Mammary epithelial cell (primary cell): ENCODE measurements at regions of chr19 and their contacts with region 1.

Region 1: DNA sequence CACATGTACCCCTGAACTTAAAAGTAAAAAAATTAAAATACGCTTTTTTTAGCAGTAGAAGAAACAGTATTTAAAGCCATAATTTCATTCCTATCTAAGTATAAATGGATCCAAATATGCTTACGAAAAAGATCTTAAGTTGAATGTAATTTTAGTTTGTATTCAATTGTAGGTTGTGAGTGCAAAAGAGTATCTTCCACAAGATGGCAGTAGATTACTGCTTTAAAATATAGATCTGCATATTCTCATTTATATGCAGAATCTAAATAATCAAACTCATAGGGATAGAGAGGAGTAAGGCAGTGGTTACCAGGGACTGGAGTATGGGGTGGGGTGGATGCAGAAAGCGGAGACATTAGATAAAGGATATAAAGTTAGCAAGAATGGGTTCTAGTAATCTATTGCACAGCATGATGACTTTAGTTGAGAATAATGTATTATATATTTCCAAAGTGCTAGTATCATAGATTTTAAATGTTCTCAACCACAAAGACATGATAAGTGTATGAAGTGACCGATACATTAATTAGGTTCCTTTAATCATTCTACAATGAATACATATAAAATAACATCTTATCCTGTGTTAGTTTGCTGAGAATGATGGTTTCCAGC is 14.2 kb downstream of the OR7A17 start:
- DNase-seq: peak; percentile 21
- H3K4me3 ChIP-seq: no peak overlapping the region
- H3K27ac ChIP-seq: no peak overlapping the region
- H3K4me1 ChIP-seq: no peaks in the 10 kb centered on the region
- H3K27me3 ChIP-seq: no peaks in the 10 kb centered on the region
- CTCF ChIP-seq: peak; percentile 56 to 69

Region 2: GRCh38 chr19:14571695-14572490 is 299.8 kb before region 1 on chr19 and contains the start of gene NDUFB7:
- CTCF ChIA-PET with region 1: no interaction called
- dilution Hi-C with region 1: no loop called
- in situ Hi-C with region 1: no loop called
- intact Hi-C with region 1: loop called (anchors 5 kb)
- DNase-seq: peak; percentile 94
- H3K4me3 ChIP-seq: peak within 1 kb of the TSS; percentile 67 to 100 (median 99)
- H3K27ac ChIP-seq: peak within 1 kb of the TSS; percentile 70
- H3K4me1 ChIP-seq: peaks cover 14% of the 10 kb centered on the region
- H3K27me3 ChIP-seq: no peaks in the 10 kb centered on the region
- CTCF ChIP-seq: peak; percentile 68 to 85
- total RNA-seq, gene NDUFB7: 142 to 177 TPM

Region 3: DNA sequence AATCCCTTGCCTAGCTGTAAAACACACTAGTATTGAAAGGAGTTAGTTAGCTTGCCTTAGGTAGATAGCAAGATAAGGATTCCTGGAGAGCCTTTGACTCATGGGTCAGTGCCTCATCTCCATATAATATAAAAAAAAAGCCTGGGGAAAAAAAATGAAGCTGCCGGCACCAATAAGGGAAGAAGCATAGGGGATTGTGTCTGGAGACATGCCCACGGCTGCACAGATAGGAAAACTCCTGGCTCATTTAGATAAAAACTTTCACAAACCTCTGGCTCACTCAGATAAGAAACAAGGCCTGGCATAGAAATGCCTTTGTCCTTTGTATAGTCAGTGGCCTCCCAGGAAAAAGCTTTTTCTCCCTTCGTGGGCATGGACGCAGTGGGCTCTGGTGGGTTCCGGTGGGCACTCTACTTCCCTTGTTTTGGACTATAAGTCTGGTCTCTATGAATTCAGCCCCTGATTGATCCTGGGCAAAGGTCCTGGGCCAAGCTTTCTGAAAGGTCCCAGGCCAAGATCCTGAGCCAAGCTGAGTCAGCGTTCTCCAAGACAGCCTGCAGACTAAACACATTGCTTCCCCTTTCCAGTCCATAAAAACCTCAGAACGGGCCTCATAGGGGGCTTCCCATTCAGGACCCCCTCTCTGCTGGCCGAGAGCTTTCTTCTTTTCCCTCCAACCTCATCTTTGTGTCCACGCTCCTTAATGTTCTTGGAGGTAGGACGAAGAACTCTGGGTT is 19.1 kb after region 1 on chr19:
- CTCF ChIA-PET with region 1: no interaction called
- dilution Hi-C with region 1: no loop called
- in situ Hi-C with region 1: no loop called
- intact Hi-C with region 1: loop called (anchors 1 kb)
- DNase-seq: no peak
- H3K4me3 ChIP-seq: no peak overlapping the region
- H3K27ac ChIP-seq: no peak overlapping the region
- H3K4me1 ChIP-seq: no peaks in the 10 kb centered on the region
- H3K27me3 ChIP-seq: no peaks in the 10 kb centered on the region
- CTCF ChIP-seq: no peak

Region 4: DNA sequence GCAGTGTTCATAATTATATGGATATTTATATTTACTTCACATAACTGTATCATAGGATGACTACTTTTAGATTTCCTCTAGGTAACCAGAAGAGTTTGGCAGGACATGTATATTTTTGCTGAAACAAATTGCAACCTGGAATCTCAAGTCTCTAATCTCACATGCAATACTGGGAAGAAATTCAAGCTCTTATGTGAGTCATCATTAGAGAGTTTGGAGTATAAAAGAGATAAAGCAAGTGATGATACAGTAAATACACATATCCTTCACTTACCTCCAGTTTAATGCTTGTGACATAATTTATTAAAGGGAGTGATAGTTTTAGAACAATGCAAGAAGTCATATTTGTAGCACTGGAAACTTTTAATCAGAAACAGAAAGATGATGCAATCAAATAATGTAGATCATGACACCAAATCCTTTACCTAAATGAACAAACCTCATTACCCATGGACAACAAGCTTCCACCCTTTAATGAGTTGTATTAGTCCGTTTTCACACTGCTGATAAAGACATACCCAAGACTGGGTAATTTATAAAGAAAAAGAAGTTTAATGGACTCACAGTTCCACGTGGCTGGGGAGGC is 30.0 kb after region 1 on chr19:
- CTCF ChIA-PET with region 1: no interaction called
- dilution Hi-C with region 1: loop called (anchors 5 kb)
- in situ Hi-C with region 1: no loop called
- intact Hi-C with region 1: no loop called
- DNase-seq: peak; percentile 17
- H3K4me3 ChIP-seq: no peak overlapping the region
- H3K27ac ChIP-seq: no peak overlapping the region
- H3K4me1 ChIP-seq: no peaks in the 10 kb centered on the region
- H3K27me3 ChIP-seq: no peaks in the 10 kb centered on the region
- CTCF ChIP-seq: no peak

Region 5: DNA sequence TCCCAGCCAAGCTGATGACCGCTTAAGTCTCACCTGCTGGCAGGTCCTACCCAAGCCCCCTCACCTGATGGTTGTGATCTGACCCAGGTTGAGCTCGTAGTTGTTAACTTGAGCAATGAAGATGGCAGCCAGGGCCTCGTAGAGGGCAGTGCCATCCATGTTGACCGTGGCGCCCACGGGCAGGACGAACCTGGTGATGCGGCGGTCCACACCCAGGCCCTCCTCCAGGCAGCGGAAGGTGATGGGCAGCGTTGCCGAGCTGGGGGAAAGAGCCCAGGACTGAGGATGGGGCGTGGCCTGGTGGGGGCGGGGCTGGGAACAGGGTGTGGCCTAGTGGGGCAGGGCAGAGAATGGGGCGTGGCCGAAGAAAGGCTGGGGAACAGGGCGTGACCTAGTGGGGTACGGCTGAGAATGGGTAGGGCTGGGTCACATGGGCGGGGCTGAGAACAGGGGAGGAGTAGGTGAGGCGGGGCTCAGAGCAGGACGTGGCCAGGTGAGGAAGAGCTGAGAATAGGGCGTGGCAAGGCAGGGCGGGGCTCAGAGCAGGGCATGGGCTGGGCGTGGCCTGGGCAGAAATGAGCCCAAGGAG is 82.4 kb after region 1 on chr19:
- CTCF ChIA-PET with region 1: no interaction called
- dilution Hi-C with region 1: no loop called
- in situ Hi-C with region 1: no loop called
- intact Hi-C with region 1: no loop called
- DNase-seq: peak; percentile 15
- H3K4me3 ChIP-seq: no peak overlapping the region
- H3K27ac ChIP-seq: no peak overlapping the region
- H3K4me1 ChIP-seq: peaks cover 4% of the 10 kb centered on the region
- H3K27me3 ChIP-seq: no peaks in the 10 kb centered on the region
- CTCF ChIP-seq: no peak

Region 6: DNA sequence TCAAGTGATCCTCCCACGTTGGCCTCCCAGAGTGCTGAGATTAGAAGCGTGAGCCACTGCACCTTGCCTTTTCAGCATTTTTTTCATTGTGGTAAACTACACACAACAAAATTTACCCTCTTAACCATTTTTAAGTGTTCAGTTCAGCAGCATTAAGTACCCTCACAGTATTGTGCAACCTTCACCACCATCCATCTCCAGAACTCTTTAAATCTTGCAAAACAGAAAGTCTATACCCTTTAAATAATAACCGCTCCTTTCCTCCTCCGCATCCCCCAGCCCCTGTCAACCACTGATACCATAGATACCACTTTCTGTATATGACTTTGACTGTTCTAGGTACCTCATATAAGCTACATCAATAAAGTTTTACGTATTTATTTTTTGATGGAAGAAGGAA is 156.8 kb after region 1 on chr19:
- CTCF ChIA-PET with region 1: no interaction called
- dilution Hi-C with region 1: no loop called
- in situ Hi-C with region 1: no loop called
- intact Hi-C with region 1: loop called (anchors 5 kb)
- DNase-seq: no peak
- H3K4me3 ChIP-seq: no peak overlapping the region
- H3K27ac ChIP-seq: no peak overlapping the region
- H3K4me1 ChIP-seq: no peaks in the 10 kb centered on the region
- H3K27me3 ChIP-seq: no peaks in the 10 kb centered on the region
- CTCF ChIP-seq: no peak

Region 7: GRCh38 chr19:15048885-15049572 is 177.3 kb after region 1 on chr19 and contains the start of gene CASP14:
- CTCF ChIA-PET with region 1: no interaction called
- dilution Hi-C with region 1: no loop called
- in situ Hi-C with region 1: no loop called
- intact Hi-C with region 1: no loop called
- DNase-seq: peak; percentile 78
- H3K4me3 ChIP-seq: peak within 1 kb of the TSS; percentile 6 to 53 (median 44)
- H3K27ac ChIP-seq: no peak within 1 kb of the TSS
- H3K4me1 ChIP-seq: peaks cover 13% of the 10 kb centered on the region
- H3K27me3 ChIP-seq: no peaks in the 10 kb centered on the region
- CTCF ChIP-seq: no peak
- total RNA-seq, gene CASP14: 2.2 to 27.6 TPM

Region 8: DNA sequence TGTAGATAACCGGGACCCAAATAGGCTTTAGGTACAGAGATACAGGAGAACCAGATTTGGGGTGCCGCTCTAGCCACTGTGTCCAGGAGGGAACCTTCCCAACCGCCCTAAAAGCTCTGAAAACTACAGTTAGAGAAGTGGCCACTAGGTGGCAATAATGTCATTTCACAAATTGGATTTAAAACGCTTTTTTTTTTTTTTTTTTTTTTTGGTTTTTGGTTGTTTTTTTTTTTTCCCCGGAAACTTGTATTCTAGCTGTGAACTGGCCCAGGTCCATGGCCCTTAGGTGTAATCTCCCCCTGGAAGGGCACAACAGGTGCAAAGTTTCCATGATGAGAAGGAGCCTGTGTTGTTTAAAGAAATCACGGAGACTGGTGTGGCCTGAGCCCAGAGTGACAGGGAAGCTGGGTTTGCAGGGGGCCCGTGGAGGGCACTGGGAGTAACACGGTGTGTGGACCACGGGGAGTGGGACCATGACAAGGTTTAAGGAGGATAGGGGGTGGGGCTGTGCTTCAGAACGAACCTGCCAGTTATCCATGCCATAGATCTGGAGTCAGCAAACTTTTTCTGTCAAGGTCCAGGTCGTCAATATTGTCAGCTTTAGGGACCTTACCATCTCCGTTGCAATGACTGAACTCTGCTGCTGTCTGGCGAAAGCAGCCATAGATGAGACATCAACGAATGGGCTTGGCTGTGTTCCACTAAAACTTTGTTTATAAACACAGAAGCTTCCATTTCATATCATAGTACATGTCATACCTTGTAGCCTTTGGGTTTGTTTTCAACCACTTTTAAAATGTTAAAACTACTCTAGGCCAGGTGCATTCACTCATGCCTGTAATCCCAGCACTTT is 220.4 kb after region 1 on chr19:
- CTCF ChIA-PET with region 1: no interaction called
- dilution Hi-C with region 1: no loop called
- in situ Hi-C with region 1: no loop called
- intact Hi-C with region 1: loop called (anchors 1 kb)
- DNase-seq: peak; percentile 41
- H3K4me3 ChIP-seq: no peak overlapping the region
- H3K27ac ChIP-seq: no peak overlapping the region
- H3K4me1 ChIP-seq: peaks cover 5% of the 10 kb centered on the region
- H3K27me3 ChIP-seq: no peaks in the 10 kb centered on the region
- CTCF ChIP-seq: peak; percentile 51 to 58

Region 9: GRCh38 chr19:15154002-15154612 is 282.4 kb after region 1 on chr19:
- CTCF ChIA-PET with region 1: no interaction called
- dilution Hi-C with region 1: no loop called
- in situ Hi-C with region 1: no loop called
- intact Hi-C with region 1: loop called (anchors 1 kb)
- DNase-seq: peak; percentile 41
- H3K4me3 ChIP-seq: no peak overlapping the region
- H3K27ac ChIP-seq: no peak overlapping the region
- H3K4me1 ChIP-seq: no peaks in the 10 kb centered on the region
- H3K27me3 ChIP-seq: no peaks in the 10 kb centered on the region
- CTCF ChIP-seq: peak; percentile 70 to 81